ENCODE measurements at regions of chr17 and their contacts with region 1.

Region 1: GRCh38 chr17:27009087-27009486 is 284.8 kb upstream of the WSB1 start:
- DNase-seq: no peak
- ATAC-seq: no peak
- H3K4me3 ChIP-seq: no peak overlapping the region
- H3K27ac ChIP-seq: no peak overlapping the region
- H3K4me1 ChIP-seq: no peaks in the 10 kb centered on the region
- H3K27me3 ChIP-seq: no peaks in the 10 kb centered on the region
- CTCF ChIP-seq: no peak
- POLR2A ChIP-seq: no peak
- RAD21 ChIP-seq: no peak

Region 2: DNA sequence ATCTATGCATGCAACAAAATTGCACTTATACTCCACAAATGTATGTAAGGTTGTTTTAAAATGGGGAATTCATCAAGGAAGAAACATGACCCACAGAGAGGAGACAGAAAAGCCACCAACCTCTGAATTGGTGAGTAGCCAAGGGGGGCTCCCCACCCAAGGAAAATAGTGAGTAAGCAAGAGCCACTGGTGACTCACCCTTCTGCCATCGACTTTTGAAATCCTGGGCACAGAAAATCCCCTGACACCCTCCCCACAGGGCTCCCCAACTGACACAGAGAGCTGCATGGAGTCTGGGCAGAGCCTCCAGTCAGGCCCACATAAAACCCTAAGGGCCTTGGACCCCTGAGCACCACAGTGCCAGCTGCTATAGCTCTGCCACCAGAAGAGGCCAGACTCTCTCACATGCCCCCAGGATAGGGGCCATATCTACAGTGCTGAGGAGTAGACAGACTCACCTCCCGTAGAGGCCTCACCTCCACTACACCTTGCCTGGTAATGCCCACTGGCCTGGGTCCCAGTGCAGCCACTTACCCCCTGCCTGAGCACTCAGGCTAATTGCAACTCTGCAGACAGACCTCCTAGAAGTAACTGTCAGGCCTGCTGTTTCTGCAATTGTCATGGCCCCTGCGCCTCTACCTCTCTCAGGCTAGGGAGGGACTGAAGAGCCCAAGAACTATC is 40.2 kb after region 1 on chr17:
- CTCF ChIA-PET with region 1: no interaction called
- POLR2A ChIA-PET with region 1: no interaction called
- dilution Hi-C with region 1: no loop called
- in situ Hi-C with region 1: loop called (anchors 10 kb)
- intact Hi-C with region 1: no loop called
- DNase-seq: no peak
- ATAC-seq: no peak
- H3K4me3 ChIP-seq: no peak overlapping the region
- H3K27ac ChIP-seq: no peak overlapping the region
- H3K4me1 ChIP-seq: no peaks in the 10 kb centered on the region
- H3K27me3 ChIP-seq: no peaks in the 10 kb centered on the region
- CTCF ChIP-seq: no peak
- POLR2A ChIP-seq: no peak
- RAD21 ChIP-seq: no peak

Region 3: GRCh38 chr17:27070836-27071235 is 61.7 kb after region 1 on chr17:
- CTCF ChIA-PET with region 1: no interaction called
- POLR2A ChIA-PET with region 1: no interaction called
- dilution Hi-C with region 1: no loop called
- in situ Hi-C with region 1: no loop called
- intact Hi-C with region 1: no loop called
- DNase-seq: no peak
- ATAC-seq: no peak
- H3K4me3 ChIP-seq: no peak overlapping the region
- H3K27ac ChIP-seq: no peak overlapping the region
- H3K4me1 ChIP-seq: no peaks in the 10 kb centered on the region
- H3K27me3 ChIP-seq: no peaks in the 10 kb centered on the region
- CTCF ChIP-seq: no peak
- POLR2A ChIP-seq: no peak
- RAD21 ChIP-seq: no peak